Right ventricle myocardium inferior (tissue), 1 donor: ENCODE measurements at regions of chr17 and their contacts with region 1.

Region 1: GRCh38 chr17:68247445-68248198 is at the start of gene AMZ2:
- DNase-seq: peak; percentile 98
- ATAC-seq: peak; percentile 99
- total RNA-seq, gene AMZ2: 89.8 TPM

Region 2: GRCh38 chr17:68152161-68152571 is 95.5 kb before region 1 on chr17:
- intact Hi-C with region 1: no loop called
- DNase-seq: no peak
- ATAC-seq: no peak

Region 3: GRCh38 chr17:68205251-68205807 is 42.3 kb before region 1 on chr17:
- intact Hi-C with region 1: loop called (anchors 5 kb)
- DNase-seq: peak; percentile 98
- ATAC-seq: peak; percentile 93

Region 4: DNA sequence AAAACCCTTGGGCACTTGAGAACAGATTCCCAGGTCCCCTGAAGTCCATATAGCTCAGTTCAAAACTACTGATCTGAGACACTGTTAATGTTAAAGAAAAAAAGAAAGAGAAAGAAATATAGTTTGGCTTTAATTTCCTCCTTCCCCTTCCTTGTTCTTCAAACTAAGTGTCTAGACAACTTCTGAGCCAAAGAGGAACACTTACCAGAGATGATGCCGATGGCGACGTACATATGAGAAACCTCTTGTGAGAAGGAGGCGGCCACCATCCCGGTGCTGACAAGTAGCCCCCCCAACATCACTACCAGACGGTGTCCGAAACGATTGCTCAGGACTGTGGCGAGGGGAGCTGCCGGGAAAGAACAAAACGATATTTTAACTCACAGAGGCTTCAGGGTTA is 26.1 kb after region 1 on chr17:
- intact Hi-C with region 1: no loop called
- DNase-seq: no peak
- ATAC-seq: no peak